ENCODE measurements at regions of chr2 and their contacts with region 1.

Region 1: DNA sequence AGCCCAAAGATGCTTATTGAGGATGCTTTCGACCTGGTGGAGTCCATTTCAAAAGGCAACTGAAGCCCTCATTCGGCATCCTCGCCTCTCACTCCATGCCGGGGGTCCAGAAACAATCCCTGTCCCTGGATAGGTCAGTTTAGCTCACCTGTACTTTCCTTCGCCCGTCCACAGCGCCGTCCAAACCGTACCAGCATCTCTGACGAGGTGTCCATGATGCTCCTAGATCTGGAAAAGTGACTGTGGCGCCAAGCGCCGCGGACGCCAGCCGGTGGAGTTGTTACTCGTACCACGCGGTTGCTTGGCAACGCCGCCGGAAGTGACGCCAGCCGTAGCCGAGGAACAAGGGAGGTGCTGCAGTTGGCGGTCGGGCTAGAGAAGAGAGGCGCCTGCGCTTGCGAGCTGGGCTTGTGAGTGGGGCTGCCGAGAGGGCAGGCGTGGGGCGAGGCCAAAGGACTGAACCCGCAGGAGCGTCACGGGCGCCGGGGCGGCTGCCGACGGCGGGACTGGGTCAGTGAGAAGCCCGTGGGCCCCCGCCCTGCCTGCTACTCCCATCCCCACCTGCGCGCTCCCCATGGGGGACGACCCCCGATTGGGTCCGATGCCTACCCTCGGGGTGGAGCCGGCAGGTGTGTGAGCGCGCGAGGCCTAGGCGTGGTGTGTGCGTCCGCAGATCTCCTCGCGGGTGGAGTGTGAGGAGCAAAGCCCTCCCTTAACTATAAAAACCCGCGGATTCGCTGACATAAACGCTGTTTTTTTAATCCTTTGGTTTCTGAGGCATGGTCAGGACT is at the starts of genes CFAP210 and PHOSPHO2:
- DNase-seq: peak; percentile 99 to 100 (median 99)
- H3K4me3 ChIP-seq: peak within 1 kb of the TSS; percentile 61 to 98 (median 91)
- H3K27ac ChIP-seq: peak within 1 kb of the TSS in 51 of 59 donors; percentile 14 to 92 (median 72)
- H3K27me3 ChIP-seq: no peaks in the 10 kb centered on the region
- CTCF ChIP-seq: peak in 34 of 56 donors; percentile 6 to 53 (median 24)
- total RNA-seq, gene CFAP210: 0.36 to 9.7 (median 2.8) TPM
- total RNA-seq, gene PHOSPHO2: 3.3 to 13.0 (median 7.3) TPM

Region 2: GRCh38 chr2:169734169-169734847 is 40.0 kb after region 1 on chr2:
- intact Hi-C with region 1: loop called in 1 of 2 experiments (anchors 5 kb)
- DNase-seq: peak in 3 of 10 donors; percentile 17 to 54 (median 53)
- H3K4me3 ChIP-seq: peak overlapping the region; percentile 31 to 85 (median 70)
- H3K27ac ChIP-seq: peak overlapping the region in 33 of 59 donors; percentile 2 to 84 (median 51)
- H3K27me3 ChIP-seq: no peaks in the 10 kb centered on the region
- CTCF ChIP-seq: no peak

Region 3: GRCh38 chr2:169815849-169816248 is 121.5 kb after region 1 on chr2:
- intact Hi-C with region 1: no loop called
- DNase-seq: no peak
- H3K4me3 ChIP-seq: no peak overlapping the region
- H3K27ac ChIP-seq: no peak overlapping the region
- H3K27me3 ChIP-seq: no peaks in the 10 kb centered on the region
- CTCF ChIP-seq: no peak

Region 4: DNA sequence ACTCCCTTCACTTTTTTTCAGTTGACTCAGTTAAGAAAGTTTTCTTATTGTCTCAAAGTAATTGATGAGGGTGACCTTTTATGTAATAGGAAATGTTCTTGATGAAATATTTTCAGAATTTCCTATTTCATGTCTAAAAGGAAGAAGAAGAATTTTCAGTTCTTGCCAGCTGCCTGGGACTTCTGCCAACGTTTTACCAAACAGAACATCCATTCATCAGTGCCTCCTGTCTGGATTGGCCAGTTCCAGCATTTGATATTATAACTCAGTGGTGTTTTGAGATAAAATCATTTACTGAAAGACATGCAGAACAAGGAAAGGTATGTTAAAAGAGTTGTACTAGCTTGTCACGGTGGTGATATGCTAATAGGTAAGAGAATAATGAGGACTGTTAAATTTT is 379.0 kb after region 1 on chr2:
- intact Hi-C with region 1: no loop called
- DNase-seq: peak in 9 of 10 donors; percentile 19 to 75 (median 56)
- H3K4me3 ChIP-seq: peak overlapping the region in 3 of 59 donors; percentile 1 to 17 (median 15)
- H3K27ac ChIP-seq: peak overlapping the region in 53 of 59 donors; percentile 1 to 79 (median 55)
- H3K27me3 ChIP-seq: no peaks in the 10 kb centered on the region
- CTCF ChIP-seq: peak in 14 of 56 donors; percentile 1 to 39 (median 18)

Region 5: GRCh38 chr2:170313347-170313991 is 619.2 kb after region 1 on chr2:
- intact Hi-C with region 1: no loop called
- DNase-seq: peak in 4 of 10 donors; percentile 3 to 42 (median 30)
- H3K4me3 ChIP-seq: no peak overlapping the region
- H3K27ac ChIP-seq: peak overlapping the region in 1 of 59 donors; percentile 11
- H3K27me3 ChIP-seq: peaks cover 0 to 24% (median 3%) of the 10 kb centered on the region in 45 donors
- CTCF ChIP-seq: no peak